Activated naive CD4-positive, alpha-beta T cell treated with anti-CD3 and anti-CD28 coated beads for 36 hours (primary cell): ENCODE measurements at regions of chr1 and their contacts with region 1.

Region 1: GRCh38 chr1:228794173-228794572 is 58.9 kb downstream of the RHOU start:
- DNase-seq: peak; percentile 52
- H3K4me3 Mint-ChIP-seq: no peak overlapping the region
- H3K27ac Mint-ChIP-seq: no peak overlapping the region
- H3K4me1 Mint-ChIP-seq: peaks cover 6% of the 10 kb centered on the region
- H3K27me3 Mint-ChIP-seq: no peaks in the 10 kb centered on the region

Region 2: GRCh38 chr1:228445843-228446650 is 348.1 kb before region 1 on chr1:
- CTCF ChIA-PET with region 1: no interaction called
- intact Hi-C with region 1: no loop called
- DNase-seq: peak; percentile 68
- H3K4me3 Mint-ChIP-seq: peak overlapping the region; percentile 77
- H3K27ac Mint-ChIP-seq: no peak overlapping the region
- H3K4me1 Mint-ChIP-seq: peaks cover 15% of the 10 kb centered on the region
- H3K27me3 Mint-ChIP-seq: peaks cover 32% of the 10 kb centered on the region

Region 3: DNA sequence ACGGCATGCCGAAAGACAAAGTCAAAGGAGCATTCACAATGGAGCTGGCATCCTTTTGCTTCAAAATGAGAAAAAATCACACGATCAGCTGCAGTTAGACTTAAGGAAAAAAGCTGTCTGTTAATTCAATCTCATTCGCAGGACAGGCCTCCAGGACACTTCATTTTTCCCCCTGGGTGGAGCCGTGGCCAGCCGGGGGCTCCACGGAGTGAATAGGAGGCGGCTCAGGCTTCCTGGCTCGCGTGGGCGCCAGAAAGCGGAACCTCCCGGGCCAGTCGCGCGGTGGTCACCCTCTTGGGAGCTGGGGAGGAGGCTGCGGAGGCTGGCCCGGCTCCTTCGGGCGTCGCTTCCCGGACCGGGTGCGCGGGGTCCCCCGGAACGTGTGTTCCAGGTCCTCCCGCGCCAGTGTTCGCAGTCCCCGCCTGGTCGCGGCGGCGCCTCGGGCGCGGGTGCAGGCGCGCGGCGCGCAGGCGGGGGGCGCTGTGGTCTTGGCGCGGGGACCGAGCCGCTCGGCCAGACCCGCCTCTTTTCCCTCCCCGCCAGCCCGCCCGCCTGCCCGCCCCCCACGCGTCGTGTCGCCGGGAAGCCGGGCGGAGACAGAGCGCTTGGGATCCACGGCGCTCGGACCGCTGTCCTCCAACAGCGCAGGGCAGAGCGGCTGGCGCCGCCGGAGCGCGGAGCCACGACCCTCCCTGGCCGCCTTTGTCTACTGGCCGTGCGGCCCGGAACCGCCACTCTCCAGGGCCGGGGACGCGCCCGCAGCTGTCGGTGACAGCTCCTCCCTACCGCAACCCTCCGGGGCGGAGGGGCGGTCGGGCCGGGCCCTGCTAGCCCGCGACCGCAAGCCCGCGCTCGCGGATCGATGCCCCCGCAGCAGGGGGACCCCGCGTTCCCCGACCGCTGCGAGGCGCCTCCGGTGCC is 59.0 kb before region 1 on chr1 and contains the start of gene RHOU:
- CTCF ChIA-PET with region 1: interaction called, 8 read pairs
- intact Hi-C with region 1: loop called (anchors 5 kb)
- DNase-seq: peak; percentile 64
- H3K4me3 Mint-ChIP-seq: peak within 1 kb of the TSS; percentile 75
- H3K27ac Mint-ChIP-seq: no peak within 1 kb of the TSS
- H3K4me1 Mint-ChIP-seq: peaks cover 3% of the 10 kb centered on the region
- H3K27me3 Mint-ChIP-seq: peaks cover 5% of the 10 kb centered on the region
- total RNA-seq, gene RHOU: 0.17 to 0.35 TPM

Region 4: DNA sequence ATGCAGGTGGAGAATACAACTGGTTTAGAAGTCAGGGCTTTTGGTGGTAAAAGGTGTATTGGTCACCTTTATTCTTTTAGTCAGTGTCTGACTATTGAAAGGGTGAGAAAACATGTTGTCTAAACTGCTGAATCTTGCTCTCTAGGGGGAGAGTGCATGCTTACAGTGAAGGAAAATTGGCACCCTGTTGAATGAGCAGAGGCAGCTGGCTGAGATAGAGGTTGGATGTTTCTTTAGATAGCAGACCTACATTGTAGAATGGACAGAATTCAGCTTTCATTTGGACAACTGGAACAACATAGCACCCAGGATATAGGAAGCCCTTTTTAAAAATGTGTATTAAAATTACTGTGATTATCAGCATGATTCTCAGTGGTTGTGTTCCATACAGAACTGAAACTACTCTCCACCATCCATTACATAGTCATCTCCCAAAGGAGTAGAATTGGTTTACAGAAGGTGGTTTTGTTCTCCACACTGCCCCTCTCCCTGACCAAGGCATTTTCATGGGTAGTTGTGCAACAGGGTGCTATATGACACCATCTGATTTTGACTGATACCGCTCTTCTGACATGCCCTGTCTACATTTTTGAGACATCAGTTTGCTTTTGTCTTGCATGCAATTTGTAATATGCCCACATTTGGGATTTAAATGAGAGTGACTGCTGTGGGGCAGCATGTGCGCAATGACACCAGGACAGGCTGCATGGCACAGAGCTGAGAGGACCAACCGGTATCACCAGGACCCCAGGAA is 42.6 kb before region 1 on chr1:
- CTCF ChIA-PET with region 1: no interaction called
- intact Hi-C with region 1: loop called (anchors 5 kb)
- DNase-seq: no peak
- H3K4me3 Mint-ChIP-seq: no peak overlapping the region
- H3K27ac Mint-ChIP-seq: no peak overlapping the region
- H3K4me1 Mint-ChIP-seq: peaks cover 11% of the 10 kb centered on the region
- H3K27me3 Mint-ChIP-seq: peaks cover 25% of the 10 kb centered on the region

Region 5: DNA sequence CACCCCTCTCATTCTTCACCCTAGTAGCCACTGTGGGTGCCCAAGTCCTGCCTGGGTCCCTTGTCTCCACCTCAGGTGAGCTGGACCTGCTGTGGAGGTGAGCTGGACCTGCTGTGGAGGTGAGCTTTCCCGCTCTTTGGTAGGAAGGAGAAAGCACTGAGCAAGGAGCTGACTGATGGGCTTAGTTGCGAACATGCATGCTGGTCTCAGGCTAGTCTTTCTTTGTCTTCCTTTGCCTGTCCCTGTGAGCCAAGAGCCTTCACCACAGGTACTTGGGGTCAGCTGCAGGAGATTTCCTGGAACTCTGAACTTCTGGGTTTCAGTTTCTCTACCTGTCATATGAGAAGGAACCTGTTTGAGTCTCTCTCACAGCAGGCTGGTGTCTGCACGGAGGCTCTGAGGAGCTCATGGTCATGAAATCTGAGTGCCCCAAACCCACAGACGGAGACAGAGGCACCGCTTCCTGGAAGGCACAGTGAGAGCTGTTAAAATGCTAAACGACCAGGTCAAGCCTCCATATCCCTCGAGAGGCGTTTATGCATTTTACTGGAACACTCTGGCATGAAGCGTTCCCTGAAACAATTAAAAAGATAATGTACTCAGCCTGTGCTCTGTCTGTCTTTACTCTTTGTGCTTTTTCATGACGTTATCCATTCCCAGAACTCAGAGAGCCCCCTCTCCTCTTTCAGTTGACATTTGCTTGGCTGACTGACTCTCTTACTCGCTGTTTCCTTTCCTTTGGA is 10.7 kb after region 1 on chr1:
- CTCF ChIA-PET with region 1: interaction called, 13 read pairs
- intact Hi-C with region 1: loop called (anchors 1 kb)
- DNase-seq: peak; percentile 64
- H3K4me3 Mint-ChIP-seq: no peak overlapping the region
- H3K27ac Mint-ChIP-seq: peak overlapping the region; percentile 6
- H3K4me1 Mint-ChIP-seq: peaks cover 32% of the 10 kb centered on the region
- H3K27me3 Mint-ChIP-seq: no peaks in the 10 kb centered on the region

Region 6: GRCh38 chr1:228825840-228826484 is 31.8 kb after region 1 on chr1:
- CTCF ChIA-PET with region 1: interaction called, 4 read pairs
- intact Hi-C with region 1: loop called (anchors 1 kb)
- DNase-seq: no peak
- H3K4me3 Mint-ChIP-seq: no peak overlapping the region
- H3K27ac Mint-ChIP-seq: no peak overlapping the region
- H3K4me1 Mint-ChIP-seq: peaks cover 21% of the 10 kb centered on the region
- H3K27me3 Mint-ChIP-seq: no peaks in the 10 kb centered on the region

Region 7: GRCh38 chr1:228837817-228838716 is 43.9 kb after region 1 on chr1:
- CTCF ChIA-PET with region 1: no interaction called
- intact Hi-C with region 1: no loop called
- DNase-seq: no peak
- H3K4me3 Mint-ChIP-seq: no peak overlapping the region
- H3K27ac Mint-ChIP-seq: no peak overlapping the region
- H3K4me1 Mint-ChIP-seq: no peaks in the 10 kb centered on the region
- H3K27me3 Mint-ChIP-seq: no peaks in the 10 kb centered on the region

Region 8: DNA sequence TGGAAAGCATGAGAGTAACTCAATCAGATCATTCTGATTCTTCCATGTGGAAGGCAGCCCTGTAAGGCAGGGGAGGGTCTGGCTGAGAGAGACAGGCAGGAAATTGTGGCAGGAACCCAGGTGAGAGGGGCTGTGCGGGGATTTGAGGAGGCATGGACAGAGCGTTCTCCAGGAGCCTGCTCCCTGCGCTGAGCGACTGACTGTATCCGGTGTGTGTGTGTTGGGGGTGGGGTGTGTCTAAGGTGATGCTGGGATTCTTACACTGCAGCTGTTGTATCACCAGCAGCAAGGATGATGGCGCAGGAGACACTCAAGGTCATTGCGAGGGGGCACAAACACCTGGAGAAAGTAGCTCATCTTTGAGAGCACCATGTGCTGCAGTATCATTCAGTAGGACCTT is 69.6 kb after region 1 on chr1:
- CTCF ChIA-PET with region 1: no interaction called
- intact Hi-C with region 1: loop called (anchors 1 kb)
- DNase-seq: no peak
- H3K4me3 Mint-ChIP-seq: no peak overlapping the region
- H3K27ac Mint-ChIP-seq: no peak overlapping the region
- H3K4me1 Mint-ChIP-seq: peaks cover 22% of the 10 kb centered on the region
- H3K27me3 Mint-ChIP-seq: no peaks in the 10 kb centered on the region